ENCODE measurements at regions of chr5 and their contacts with region 1.

Region 1: GRCh38 chr5:64147849-64148441 is 17.7 kb upstream of the RNF180 start:
- DNase-seq: peak; percentile 68
- ATAC-seq: peak; percentile 92
- H3K4me3 Mint-ChIP-seq: no peak overlapping the region
- H3K27ac Mint-ChIP-seq: no peak overlapping the region
- H3K4me1 Mint-ChIP-seq: no peaks in the 10 kb centered on the region
- H3K27me3 Mint-ChIP-seq: no peaks in the 10 kb centered on the region
- CTCF ChIP-seq: peak; percentile 51

Region 2: DNA sequence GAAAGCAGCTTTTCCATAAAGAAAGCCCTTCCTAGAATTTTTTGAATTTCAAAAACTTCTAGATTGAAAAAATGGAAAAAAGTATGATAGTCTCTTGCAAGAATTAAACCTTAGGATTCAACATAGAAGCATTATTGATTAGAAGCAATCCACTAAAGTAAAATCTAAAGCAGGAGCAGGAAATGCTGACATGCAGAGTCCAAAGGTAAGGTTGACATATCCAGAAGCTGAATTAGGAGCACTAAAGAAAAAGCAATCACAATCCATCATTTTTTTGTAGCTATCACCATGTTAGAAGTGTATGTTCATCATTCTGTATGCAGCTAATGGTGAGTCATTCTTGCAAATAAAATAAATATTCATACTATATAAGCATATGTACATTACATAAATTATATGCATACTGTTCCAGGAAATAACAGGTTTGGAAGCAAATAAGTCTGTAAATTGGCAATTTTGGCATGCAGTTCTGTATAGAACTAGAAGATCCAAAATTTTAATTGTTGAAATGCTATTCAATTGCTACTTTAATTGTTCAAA is 21.7 kb before region 1 on chr5:
- CTCF ChIA-PET with region 1: no interaction called
- POLR2A ChIA-PET with region 1: no interaction called
- DNase-seq: no peak
- ATAC-seq: no peak
- H3K4me3 Mint-ChIP-seq: no peak overlapping the region
- H3K27ac Mint-ChIP-seq: no peak overlapping the region
- H3K4me1 Mint-ChIP-seq: peaks cover 2% of the 10 kb centered on the region; the same call in 1 of the 2 replicates
- H3K27me3 Mint-ChIP-seq: no peaks in the 10 kb centered on the region
- CTCF ChIP-seq: no peak

Region 3: DNA sequence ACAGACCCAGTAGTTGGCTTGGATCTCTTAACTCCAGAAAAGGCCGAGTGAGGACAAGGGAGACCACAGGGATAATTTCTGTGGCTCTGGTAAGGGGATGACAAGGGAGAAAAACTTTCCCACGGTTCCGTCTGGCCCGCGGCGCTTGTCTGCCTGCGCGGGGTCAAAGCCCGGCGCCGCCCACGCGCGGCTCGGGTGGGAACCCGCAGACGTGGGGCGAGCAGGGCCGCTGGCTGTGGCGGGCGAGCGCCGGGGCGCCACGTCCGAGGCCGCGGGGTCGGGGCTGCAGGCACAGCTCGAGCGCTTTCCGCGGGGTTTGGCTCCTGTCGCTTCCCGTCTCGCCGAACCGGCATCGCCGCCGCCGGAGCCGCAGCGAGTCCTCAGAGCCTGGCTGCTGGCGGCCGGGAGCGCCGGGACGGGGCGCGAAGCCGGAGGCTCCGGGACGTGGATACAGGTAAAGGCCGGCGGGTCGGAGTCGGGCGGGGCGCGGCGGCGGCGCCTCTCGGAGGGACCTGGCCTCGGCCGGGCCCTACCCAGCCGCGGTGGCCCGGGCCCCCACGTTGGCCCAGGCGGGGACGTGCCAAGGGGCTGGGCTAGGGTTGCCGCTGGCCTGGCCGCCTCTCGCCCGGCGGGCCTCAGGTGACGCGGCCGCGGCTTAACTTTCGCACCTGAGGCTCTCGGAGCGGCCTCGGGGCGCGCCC is 17.7 kb after region 1 on chr5 and contains the start of gene RNF180:
- CTCF ChIA-PET with region 1: interaction called, 11 read pairs
- POLR2A ChIA-PET with region 1: no interaction called
- DNase-seq: peak; percentile 73
- ATAC-seq: peak; percentile 91
- H3K4me3 Mint-ChIP-seq: peak within 1 kb of the TSS; percentile 84
- H3K27ac Mint-ChIP-seq: peak within 1 kb of the TSS; percentile 54; the same call in 1 of the 2 replicates
- H3K4me1 Mint-ChIP-seq: peaks cover 7% of the 10 kb centered on the region
- H3K27me3 Mint-ChIP-seq: peaks cover 34% of the 10 kb centered on the region
- CTCF ChIP-seq: no peak
- total RNA-seq, gene RNF180: 2.5 to 3.4 TPM (median 2.7 TPM) in 3 replicates

Region 4: DNA sequence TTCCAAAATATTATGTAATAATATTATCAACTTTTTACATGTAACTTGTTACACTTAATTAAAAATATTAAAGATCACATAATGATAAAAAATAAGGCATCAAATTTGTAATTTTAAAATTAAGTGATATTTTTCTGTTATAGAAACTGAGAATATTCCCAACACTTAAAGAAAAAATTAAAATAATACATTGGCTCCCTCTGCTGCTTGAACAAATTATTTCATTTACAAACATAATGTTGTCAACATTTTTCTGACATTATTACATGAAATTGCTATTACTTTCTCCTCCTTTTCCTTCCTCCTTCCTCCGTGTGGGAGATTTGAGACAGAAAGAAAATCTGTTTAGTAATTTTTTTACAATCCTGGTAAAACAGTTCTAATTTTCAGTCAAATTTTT is 60.0 kb after region 1 on chr5:
- CTCF ChIA-PET with region 1: interaction called, 12 read pairs
- POLR2A ChIA-PET with region 1: no interaction called
- DNase-seq: no peak
- ATAC-seq: no peak
- H3K4me3 Mint-ChIP-seq: no peak overlapping the region
- H3K27ac Mint-ChIP-seq: no peak overlapping the region
- H3K4me1 Mint-ChIP-seq: no peaks in the 10 kb centered on the region
- H3K27me3 Mint-ChIP-seq: no peaks in the 10 kb centered on the region
- CTCF ChIP-seq: no peak

Region 5: GRCh38 chr5:64273276-64273675 is 125.3 kb after region 1 on chr5:
- CTCF ChIA-PET with region 1: no interaction called
- POLR2A ChIA-PET with region 1: no interaction called
- DNase-seq: no peak
- ATAC-seq: no peak
- H3K4me3 Mint-ChIP-seq: no peak overlapping the region
- H3K27ac Mint-ChIP-seq: no peak overlapping the region
- H3K4me1 Mint-ChIP-seq: peaks cover 11% of the 10 kb centered on the region
- H3K27me3 Mint-ChIP-seq: no peaks in the 10 kb centered on the region
- CTCF ChIP-seq: no peak

Measured in WTC11 (cell line).